GM12878 (cell line): ENCODE measurements at regions of chr11 and their contacts with region 1.

Region 1: GRCh38 chr11:60251485-60252212 is 8.7 kb upstream of the MS4A4E start:
- DNase-seq: peak; percentile 59
- ATAC-seq: peak; percentile 96
- H3K4me3 ChIP-seq: no peak overlapping the region
- H3K27ac ChIP-seq: no peak overlapping the region
- H3K4me1 ChIP-seq: no peaks in the 10 kb centered on the region
- H3K27me3 ChIP-seq: no peaks in the 10 kb centered on the region
- CTCF ChIP-seq: peak; percentile 63 to 78 (median 68)
- EP300 ChIP-seq: no peak
- POLR2A ChIP-seq: no peak
- RAD21 ChIP-seq: peak; percentile 99

Region 2: DNA sequence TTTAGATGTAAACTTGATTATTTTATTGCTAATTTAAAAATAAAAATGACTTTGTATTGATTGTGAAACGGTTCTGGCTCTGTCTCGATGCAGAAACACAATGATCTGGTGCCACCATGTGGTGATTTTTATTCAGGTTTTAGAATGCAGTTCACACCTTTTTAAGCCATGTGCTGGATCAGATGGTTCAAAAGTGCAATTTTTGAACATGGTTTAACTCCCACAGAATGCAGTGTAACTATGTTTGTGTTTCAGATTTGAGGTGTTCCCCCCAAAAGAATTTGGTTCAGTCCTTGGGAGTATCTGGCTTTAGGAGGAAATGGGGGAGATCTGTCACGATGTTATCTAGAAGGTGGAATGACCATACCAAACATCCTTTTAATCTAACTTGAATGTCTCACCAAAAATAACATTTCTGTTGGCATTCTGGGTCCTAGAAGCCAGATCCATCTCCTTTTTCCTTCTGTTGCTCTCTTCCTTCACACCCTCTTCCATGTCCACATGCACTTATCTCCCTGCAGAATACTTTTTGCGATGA is 448.9 kb before region 1 on chr11:
- CTCF ChIA-PET with region 1: interaction called, 11 read pairs
- POLR2A ChIA-PET with region 1: no interaction called
- RAD21 ChIA-PET with region 1: interaction called, 5 read pairs
- SMC1A ChIA-PET with region 1: no interaction called
- in situ Hi-C with region 1: no loop called
- intact Hi-C with region 1: no loop called
- DNase-seq: no peak
- ATAC-seq: peak; percentile 82
- H3K4me3 ChIP-seq: no peak overlapping the region
- H3K27ac ChIP-seq: no peak overlapping the region
- H3K4me1 ChIP-seq: no peaks in the 10 kb centered on the region
- H3K27me3 ChIP-seq: no peaks in the 10 kb centered on the region
- CTCF ChIP-seq: peak; percentile 47 to 73 (median 65); a peak in 5 of 6 replicates
- EP300 ChIP-seq: no peak
- POLR2A ChIP-seq: no peak
- RAD21 ChIP-seq: peak; percentile 86

Region 3: GRCh38 chr11:60077981-60078380 is 173.7 kb before region 1 on chr11:
- CTCF ChIA-PET with region 1: no interaction called
- POLR2A ChIA-PET with region 1: no interaction called
- RAD21 ChIA-PET with region 1: no interaction called
- SMC1A ChIA-PET with region 1: interaction called, 3 read pairs
- in situ Hi-C with region 1: no loop called
- intact Hi-C with region 1: loop called (anchors 10 kb)
- DNase-seq: no peak
- ATAC-seq: no peak
- H3K4me3 ChIP-seq: no peak overlapping the region
- H3K27ac ChIP-seq: no peak overlapping the region
- H3K4me1 ChIP-seq: no peaks in the 10 kb centered on the region
- H3K27me3 ChIP-seq: no peaks in the 10 kb centered on the region; a peak in 1 of 4 replicates
- CTCF ChIP-seq: no peak
- EP300 ChIP-seq: no peak
- POLR2A ChIP-seq: no peak
- RAD21 ChIP-seq: no peak

Region 4: GRCh38 chr11:60169264-60169915 is 82.3 kb before region 1 on chr11:
- CTCF ChIA-PET with region 1: interaction called, 11 read pairs
- POLR2A ChIA-PET with region 1: no interaction called
- RAD21 ChIA-PET with region 1: interaction called, 16 read pairs
- SMC1A ChIA-PET with region 1: interaction called, 12 read pairs
- in situ Hi-C with region 1: no loop called
- intact Hi-C with region 1: no loop called
- DNase-seq: no peak
- ATAC-seq: peak; percentile 51
- H3K4me3 ChIP-seq: no peak overlapping the region
- H3K27ac ChIP-seq: no peak overlapping the region
- H3K4me1 ChIP-seq: no peaks in the 10 kb centered on the region
- H3K27me3 ChIP-seq: no peaks in the 10 kb centered on the region
- CTCF ChIP-seq: peak; percentile 4 to 32 (median 8); a peak in 1 of 6 replicates
- EP300 ChIP-seq: no peak
- POLR2A ChIP-seq: no peak
- RAD21 ChIP-seq: peak; percentile 47

Region 5: GRCh38 chr11:60204922-60205321 is 46.7 kb before region 1 on chr11:
- CTCF ChIA-PET with region 1: interaction called, 18 read pairs
- POLR2A ChIA-PET with region 1: no interaction called
- RAD21 ChIA-PET with region 1: interaction called, 4 read pairs
- SMC1A ChIA-PET with region 1: interaction called, 10 read pairs
- in situ Hi-C with region 1: no loop called
- intact Hi-C with region 1: no loop called
- DNase-seq: no peak
- ATAC-seq: peak; percentile 72
- H3K4me3 ChIP-seq: no peak overlapping the region
- H3K27ac ChIP-seq: no peak overlapping the region
- H3K4me1 ChIP-seq: peaks cover 8% of the 10 kb centered on the region
- H3K27me3 ChIP-seq: no peaks in the 10 kb centered on the region
- CTCF ChIP-seq: no peak
- EP300 ChIP-seq: peak; percentile 76 to 90
- POLR2A ChIP-seq: no peak
- RAD21 ChIP-seq: no peak

Region 6: DNA sequence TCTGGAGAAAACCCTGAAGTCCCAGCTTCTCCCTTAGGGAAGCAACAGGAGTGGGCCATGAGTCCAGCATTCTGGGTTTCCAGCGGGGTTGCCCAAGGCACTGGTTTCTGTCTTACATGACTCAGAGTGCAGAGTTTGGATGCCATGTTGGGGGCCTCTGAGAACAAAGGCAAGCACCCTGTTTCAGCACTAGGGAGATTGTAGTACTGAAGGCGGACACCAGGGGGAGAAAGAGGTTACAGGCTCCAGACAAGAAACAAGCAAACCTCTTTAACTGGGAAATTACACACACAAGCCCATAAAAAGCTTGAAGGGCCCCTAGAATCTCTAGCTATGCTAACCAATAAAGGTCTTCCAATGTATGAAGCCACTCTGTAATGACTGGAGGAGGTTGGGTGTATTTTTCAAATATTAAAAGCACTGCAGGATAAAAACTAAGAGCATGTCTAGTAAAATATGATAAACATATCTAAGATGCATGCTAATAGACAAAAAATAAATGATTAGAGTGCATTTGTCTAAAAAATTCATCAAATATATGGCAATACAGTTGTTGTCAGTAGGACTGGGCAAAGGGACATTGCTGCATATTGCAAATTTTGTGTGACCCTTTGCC is 82.5 kb after region 1 on chr11:
- CTCF ChIA-PET with region 1: interaction called, 10 read pairs
- POLR2A ChIA-PET with region 1: no interaction called
- RAD21 ChIA-PET with region 1: no interaction called
- SMC1A ChIA-PET with region 1: interaction called, 9 read pairs
- in situ Hi-C with region 1: no loop called
- intact Hi-C with region 1: no loop called
- DNase-seq: no peak
- ATAC-seq: peak; percentile 65
- H3K4me3 ChIP-seq: no peak overlapping the region
- H3K27ac ChIP-seq: no peak overlapping the region
- H3K4me1 ChIP-seq: peaks cover 22% of the 10 kb centered on the region
- H3K27me3 ChIP-seq: no peaks in the 10 kb centered on the region
- CTCF ChIP-seq: peak; percentile 73 to 86 (median 74)
- EP300 ChIP-seq: no peak
- POLR2A ChIP-seq: no peak
- RAD21 ChIP-seq: peak; percentile 67

Region 7: GRCh38 chr11:60377401-60378136 is 125.9 kb after region 1 on chr11:
- CTCF ChIA-PET with region 1: no interaction called
- POLR2A ChIA-PET with region 1: no interaction called
- RAD21 ChIA-PET with region 1: no interaction called
- SMC1A ChIA-PET with region 1: no interaction called
- in situ Hi-C with region 1: no loop called
- intact Hi-C with region 1: no loop called
- DNase-seq: peak; percentile 85
- ATAC-seq: peak; percentile 87
- H3K4me3 ChIP-seq: 0 out of 2 replicates have a peak overlapping the region, but pooled peaks have one; percentile 3
- H3K27ac ChIP-seq: peak overlapping the region; percentile 79
- H3K4me1 ChIP-seq: peaks cover 17% of the 10 kb centered on the region
- H3K27me3 ChIP-seq: no peaks in the 10 kb centered on the region
- CTCF ChIP-seq: no peak
- EP300 ChIP-seq: peak; percentile 64 to 77; a peak in 2 of 4 replicates
- POLR2A ChIP-seq: no peak; the same call in 1 of the 2 replicates
- RAD21 ChIP-seq: no peak

Region 8: DNA sequence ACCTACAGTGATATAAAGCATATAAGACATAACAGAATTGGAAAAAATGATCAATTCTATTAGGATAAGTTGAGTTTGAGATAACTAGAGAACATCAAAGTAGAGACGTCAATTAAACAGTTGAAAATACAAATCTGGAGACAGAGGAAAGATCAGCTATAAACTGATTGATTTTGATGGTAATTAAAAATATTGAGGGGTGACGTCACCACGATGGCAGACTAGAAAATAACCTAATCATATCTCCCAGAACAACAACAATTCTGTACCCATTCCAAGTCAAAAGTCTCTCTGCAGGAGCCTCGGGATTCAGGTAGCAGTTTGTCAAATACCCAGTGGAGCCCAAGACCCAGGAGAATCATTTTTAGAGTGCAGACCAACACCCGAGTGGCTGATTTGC is 292.4 kb after region 1 on chr11:
- CTCF ChIA-PET with region 1: no interaction called
- POLR2A ChIA-PET with region 1: no interaction called
- RAD21 ChIA-PET with region 1: no interaction called
- SMC1A ChIA-PET with region 1: no interaction called
- in situ Hi-C with region 1: no loop called
- intact Hi-C with region 1: no loop called
- DNase-seq: no peak
- ATAC-seq: no peak
- H3K4me3 ChIP-seq: no peak overlapping the region
- H3K27ac ChIP-seq: no peak overlapping the region
- H3K4me1 ChIP-seq: no peaks in the 10 kb centered on the region
- H3K27me3 ChIP-seq: no peaks in the 10 kb centered on the region; a peak in 1 of 4 replicates
- CTCF ChIP-seq: no peak
- EP300 ChIP-seq: no peak
- POLR2A ChIP-seq: no peak
- RAD21 ChIP-seq: no peak